Heart left ventricle (tissue), 16 donors: ENCODE measurements at regions of chr14 and their contacts with region 1.

Region 1: GRCh38 chr14:24678801-24679247 is 44.8 kb upstream of the GZMB start:
- DNase-seq: peak in 4 of 5 donors; percentile 73 to 81 (median 78)
- ATAC-seq: peak; percentile 77 to 96 (median 90)
- H3K4me3 ChIP-seq: peak overlapping the region in 9 of 12 donors; percentile 11 to 48 (median 39)
- H3K27ac ChIP-seq: peak overlapping the region in 3 of 12 donors; percentile 5 to 59 (median 16)
- H3K4me1 ChIP-seq: peaks cover 0 to 31% (median 5%) of the 10 kb centered on the region in 12 donors
- H3K27me3 ChIP-seq: peaks cover 0 to 2% (median 0%) of the 10 kb centered on the region in 9 donors
- CTCF ChIP-seq: peak; percentile 90 to 100 (median 96)
- POLR2A ChIP-seq: no peak

Region 2: DNA sequence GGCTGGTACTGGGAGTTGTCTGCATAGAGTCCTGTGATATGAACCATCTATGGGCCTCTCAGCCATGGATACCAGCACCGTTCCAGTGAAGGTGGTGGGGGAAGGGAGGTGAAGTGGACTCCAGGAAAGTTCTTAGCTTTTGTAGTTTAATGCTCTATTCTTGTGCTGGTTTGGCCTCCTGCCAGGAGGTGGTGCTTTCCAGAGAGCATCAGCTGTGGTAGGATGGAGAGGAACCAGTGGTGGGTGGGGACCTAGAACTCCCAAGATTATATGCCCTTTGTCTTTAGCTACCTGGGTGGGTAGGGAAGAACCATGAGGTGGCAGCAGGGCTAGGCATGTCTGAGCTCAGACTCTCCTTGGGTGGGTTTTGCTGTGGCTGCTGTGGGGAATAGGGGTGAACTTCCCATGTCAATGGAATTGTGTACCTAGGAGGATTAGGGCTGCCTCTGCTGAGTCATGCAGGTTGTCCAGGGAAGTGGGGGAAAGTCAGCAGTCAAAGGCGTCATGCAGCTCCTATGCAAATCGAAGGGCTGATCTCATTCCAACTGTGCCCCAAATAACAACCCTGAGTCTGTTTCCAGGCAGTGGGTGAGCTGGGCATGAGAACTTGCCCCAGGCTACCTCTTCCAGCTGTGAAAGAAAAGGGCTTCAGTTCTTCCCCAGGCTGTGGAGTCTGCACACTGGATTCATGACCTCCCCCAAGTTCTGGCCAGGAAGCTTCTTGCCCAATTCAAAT is 83.6 kb before region 1 on chr14:
- intact Hi-C with region 1: no loop called
- DNase-seq: no peak
- ATAC-seq: no peak
- H3K4me3 ChIP-seq: no peak overlapping the region
- H3K27ac ChIP-seq: no peak overlapping the region
- H3K4me1 ChIP-seq: no peaks in the 10 kb centered on the region
- H3K27me3 ChIP-seq: no peaks in the 10 kb centered on the region
- CTCF ChIP-seq: no peak
- POLR2A ChIP-seq: no peak

Region 3: GRCh38 chr14:24605435-24606190 is 73.2 kb before region 1 on chr14:
- intact Hi-C with region 1: loop called in 1 of 10 experiments (anchors 2 kb)
- DNase-seq: peak in 3 of 5 donors; percentile 9 to 69 (median 29)
- ATAC-seq: peak in 1 of 4 donors; percentile 28
- H3K4me3 ChIP-seq: no peak overlapping the region
- H3K27ac ChIP-seq: peak overlapping the region in 1 of 12 donors; percentile 24
- H3K4me1 ChIP-seq: no peaks in the 10 kb centered on the region
- H3K27me3 ChIP-seq: peaks cover 0 to 7% (median 0%) of the 10 kb centered on the region in 9 donors
- CTCF ChIP-seq: peak; percentile 32 to 82 (median 57)
- POLR2A ChIP-seq: no peak